CD14-positive monocyte (primary cell): ENCODE measurements at regions of chr2 and their contacts with region 1.

Region 1: DNA sequence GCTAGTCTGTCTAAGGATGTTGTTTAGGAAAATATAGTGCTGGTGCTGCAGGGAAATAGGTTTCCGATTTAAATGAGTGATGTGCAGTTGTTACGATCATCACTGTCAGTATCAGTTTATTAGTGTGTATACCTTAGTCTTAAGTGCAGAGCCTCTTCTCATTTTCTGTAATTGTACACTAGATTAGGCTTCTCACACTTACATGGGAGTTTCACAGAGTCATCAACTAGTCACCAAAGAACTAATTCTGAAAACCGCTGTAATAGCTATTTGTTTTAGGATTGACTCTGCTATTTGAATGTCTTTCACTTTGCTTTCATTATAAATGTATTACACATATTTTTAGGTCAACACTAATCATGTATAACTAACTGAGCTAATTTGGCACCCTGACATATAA is 99.8 kb upstream of the ZEB2 start:
- DNase-seq: no peak
- H3K4me3 ChIP-seq: no peak overlapping the region
- H3K4me3 Mint-ChIP-seq: no peak overlapping the region
- H3K27ac ChIP-seq: no peak overlapping the region
- H3K27ac Mint-ChIP-seq: no peak overlapping the region
- H3K4me1 ChIP-seq: peaks cover 4 to 7% of the 10 kb centered on the region in 2 donors
- H3K4me1 Mint-ChIP-seq: peaks cover 20% of the 10 kb centered on the region
- H3K27me3 ChIP-seq: no peaks in the 10 kb centered on the region
- H3K27me3 Mint-ChIP-seq: peaks cover 0 to 2% (median 0%) of the 10 kb centered on the region in 3 donors
- CTCF ChIP-seq: no peak

Region 2: DNA sequence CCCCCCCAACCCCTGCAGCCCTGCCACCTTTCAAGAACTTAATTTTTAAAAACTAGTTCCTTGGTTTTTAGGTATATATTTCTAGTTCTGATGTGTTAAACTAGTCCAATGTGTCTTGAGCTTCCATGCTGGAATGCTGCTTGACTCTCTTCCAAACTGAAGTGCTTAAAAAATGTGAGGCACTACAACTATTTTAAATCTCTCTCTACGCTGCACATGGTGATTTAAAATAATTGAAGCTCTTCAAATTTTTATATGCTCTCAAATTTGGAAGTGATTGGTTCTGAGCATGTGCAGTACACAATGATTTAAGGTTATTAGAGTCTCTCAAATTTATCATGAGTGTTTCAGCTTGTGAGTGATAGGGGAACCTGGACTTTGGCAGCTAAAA is 92.8 kb after region 1 on chr2:
- intact Hi-C with region 1: no loop called
- DNase-seq: no peak
- H3K4me3 ChIP-seq: no peak overlapping the region
- H3K4me3 Mint-ChIP-seq: no peak overlapping the region
- H3K27ac ChIP-seq: no peak overlapping the region
- H3K27ac Mint-ChIP-seq: peak overlapping the region in 1 of 7 donors; percentile 15
- H3K4me1 ChIP-seq: peaks cover 3 to 9% of the 10 kb centered on the region in 2 donors
- H3K4me1 Mint-ChIP-seq: peaks cover 33% of the 10 kb centered on the region
- H3K27me3 ChIP-seq: no peaks in the 10 kb centered on the region
- H3K27me3 Mint-ChIP-seq: no peaks in the 10 kb centered on the region
- CTCF ChIP-seq: no peak

Region 3: DNA sequence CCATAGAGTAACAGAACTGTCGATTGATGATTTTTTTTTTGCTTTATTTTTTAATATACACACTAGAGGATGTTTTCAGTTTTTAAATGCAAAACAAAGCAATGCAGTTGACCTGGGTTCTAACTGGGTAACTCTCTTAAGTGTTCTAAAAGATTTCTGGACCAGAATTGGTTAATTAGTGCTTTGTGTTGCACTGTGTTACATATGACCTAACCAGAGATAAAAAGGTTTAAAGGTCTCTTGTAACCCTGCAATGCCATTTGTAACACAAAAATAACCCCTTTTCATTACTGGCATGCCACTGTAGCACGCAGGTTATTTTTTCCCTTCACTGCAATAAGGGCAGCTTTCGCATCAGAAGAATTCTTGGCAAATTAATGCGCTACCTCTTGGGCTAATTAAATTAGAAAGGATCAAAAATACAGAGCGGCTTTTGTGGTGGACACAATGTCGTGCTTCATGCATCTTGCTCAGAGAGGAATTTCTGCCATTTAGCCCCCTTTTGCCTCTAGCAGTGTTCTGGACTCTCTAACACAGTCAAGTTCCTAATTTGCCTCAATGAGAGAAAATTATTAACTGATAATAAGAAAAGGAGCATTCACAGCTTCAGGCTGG is 151.0 kb after region 1 on chr2:
- intact Hi-C with region 1: loop called in 1 of 2 experiments (anchors 5 kb)
- DNase-seq: no peak
- H3K4me3 ChIP-seq: no peak overlapping the region
- H3K4me3 Mint-ChIP-seq: no peak overlapping the region
- H3K27ac ChIP-seq: no peak overlapping the region
- H3K27ac Mint-ChIP-seq: no peak overlapping the region
- H3K4me1 ChIP-seq: peaks cover 7 to 24% of the 10 kb centered on the region in 2 donors
- H3K4me1 Mint-ChIP-seq: peaks cover 15% of the 10 kb centered on the region
- H3K27me3 ChIP-seq: no peaks in the 10 kb centered on the region
- H3K27me3 Mint-ChIP-seq: no peaks in the 10 kb centered on the region
- CTCF ChIP-seq: no peak